CD8-positive, alpha-beta T cell (primary cell): ENCODE measurements at regions of chr2 and their contacts with region 1.

Region 1: GRCh38 chr2:11024259-11024645 is 112.5 kb downstream of the KCNF1 start:
- DNase-seq: peak in 1 of 9 experiments; percentile 13
- ATAC-seq: no peak
- H3K4me3 ChIP-seq: no peak overlapping the region
- H3K4me3 Mint-ChIP-seq: no peak overlapping the region
- H3K27ac ChIP-seq: no peak overlapping the region
- H3K27ac Mint-ChIP-seq: no peak overlapping the region
- H3K4me1 ChIP-seq: no peaks in the 10 kb centered on the region
- H3K4me1 Mint-ChIP-seq: no peaks in the 10 kb centered on the region
- H3K27me3 ChIP-seq: no peaks in the 10 kb centered on the region
- H3K27me3 Mint-ChIP-seq: no peaks in the 10 kb centered on the region
- CTCF ChIP-seq: no peak

Region 2: DNA sequence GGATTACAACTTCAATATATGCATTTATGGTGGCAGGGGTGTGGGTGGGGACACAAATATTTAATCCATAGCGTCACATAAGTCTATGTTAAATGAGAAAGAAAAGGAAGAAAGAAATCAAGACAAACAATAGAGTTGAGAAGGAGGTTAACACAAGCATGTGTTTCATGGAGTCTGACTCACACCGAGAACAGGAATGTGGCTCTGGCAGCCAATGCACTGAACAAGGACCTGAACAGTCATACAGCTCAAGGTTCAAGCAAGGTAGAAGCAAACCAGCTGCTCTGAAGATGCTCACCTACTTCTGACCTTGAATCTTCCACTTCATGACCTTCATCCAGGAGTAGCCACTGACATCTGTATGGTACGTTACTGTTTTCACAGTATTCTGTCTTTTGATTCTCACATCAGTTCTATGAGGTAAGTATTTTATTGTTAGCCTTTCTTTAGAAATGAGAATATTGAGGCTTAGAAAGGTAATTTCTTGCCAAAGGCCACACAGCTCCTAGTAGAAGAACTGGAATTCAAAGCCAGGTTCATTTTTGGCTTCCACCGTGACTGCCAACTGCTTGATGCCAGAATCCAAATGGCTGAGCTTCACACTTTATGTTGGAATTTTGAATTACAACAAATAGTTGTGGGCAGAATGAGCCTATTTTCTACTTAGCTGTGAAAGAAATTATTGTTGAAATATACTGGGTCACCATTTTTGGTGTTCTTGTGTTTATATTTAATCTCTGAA is 686.2 kb after region 1 on chr2:
- CTCF ChIA-PET with region 1: no interaction called
- POLR2A ChIA-PET with region 1: no interaction called
- intact Hi-C with region 1: loop called in 1 of 2 experiments (anchors 5 kb)
- DNase-seq: no peak
- ATAC-seq: no peak
- H3K4me3 ChIP-seq: no peak overlapping the region
- H3K4me3 Mint-ChIP-seq: no peak overlapping the region
- H3K27ac ChIP-seq: no peak overlapping the region
- H3K27ac Mint-ChIP-seq: no peak overlapping the region
- H3K4me1 ChIP-seq: no peaks in the 10 kb centered on the region
- H3K4me1 Mint-ChIP-seq: no peaks in the 10 kb centered on the region
- H3K27me3 ChIP-seq: no peaks in the 10 kb centered on the region
- H3K27me3 Mint-ChIP-seq: no peaks in the 10 kb centered on the region
- CTCF ChIP-seq: no peak